ENCODE measurements at regions of chr16 and their contacts with region 1.

Region 1: DNA sequence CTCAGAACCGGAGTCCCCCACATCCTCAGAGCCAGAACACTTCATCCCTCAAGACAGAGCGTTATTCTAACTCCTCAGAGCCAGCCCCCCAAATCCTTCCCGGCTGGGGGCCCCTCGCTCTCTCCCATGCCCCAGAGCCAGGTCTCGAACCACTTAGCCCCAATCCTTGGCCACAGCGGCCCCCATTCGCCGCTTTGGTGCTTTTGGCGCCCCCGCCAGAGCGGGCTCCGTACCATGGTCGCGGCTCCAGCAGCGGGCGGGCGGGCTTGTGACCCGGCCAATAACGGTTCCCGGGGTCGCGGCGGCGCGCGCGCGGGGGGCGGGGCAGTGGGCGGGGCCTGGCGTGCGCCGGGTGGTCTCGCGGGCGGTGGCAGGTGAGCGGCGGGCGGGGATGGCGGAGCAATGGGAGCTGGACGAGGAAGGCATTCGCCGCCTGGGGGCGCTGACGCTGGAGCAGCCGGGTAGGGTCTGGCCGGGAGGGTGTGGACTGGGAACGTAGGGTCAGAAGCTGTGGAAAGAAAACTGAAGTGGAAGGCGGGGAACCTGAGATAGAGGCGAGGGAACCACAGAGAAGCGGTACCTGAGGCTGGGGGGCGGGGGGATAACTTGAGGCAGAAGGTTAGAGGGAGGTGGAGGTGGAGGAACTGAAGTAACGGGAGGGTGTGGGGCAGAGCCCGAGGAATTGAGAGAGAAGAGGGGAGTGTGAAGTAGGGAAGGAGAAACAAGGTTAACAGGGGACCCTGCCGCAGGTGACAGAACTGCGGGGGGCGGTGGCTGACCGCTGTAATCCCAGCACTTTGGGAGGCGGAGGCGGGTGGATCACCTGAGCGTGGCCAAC is at the starts of genes KCTD19 and LRRC36:
- DNase-seq: no peak
- H3K4me3 ChIP-seq: peak within 1 kb of the TSS; percentile 61
- H3K27ac ChIP-seq: no peak within 1 kb of the TSS
- H3K27me3 ChIP-seq: no peaks in the 10 kb centered on the region
- CTCF ChIP-seq: peak; percentile 50
- polyA plus RNA-seq, gene KCTD19: 0.21 and 0.25 TPM in 2 replicates
- polyA plus RNA-seq, gene LRRC36: 0.21 and 0.41 TPM in 2 replicates

Region 2: GRCh38 chr16:67279296-67280089 is 47.2 kb before region 1 on chr16 and contains the start of gene PLEKHG4:
- CTCF ChIA-PET with region 1: no interaction called
- POLR2A ChIA-PET with region 1: no interaction called
- DNase-seq: no peak
- H3K4me3 ChIP-seq: peak within 1 kb of the TSS; percentile 68
- H3K27ac ChIP-seq: peak within 1 kb of the TSS; percentile 98
- H3K27me3 ChIP-seq: no peaks in the 10 kb centered on the region
- CTCF ChIP-seq: peak; percentile 55
- polyA plus RNA-seq, gene PLEKHG4: 17.2 and 23.3 TPM in 2 replicates

Region 3: GRCh38 chr16:67339453-67339852 is 12.8 kb after region 1 on chr16:
- CTCF ChIA-PET with region 1: interaction called, 14 read pairs
- POLR2A ChIA-PET with region 1: no interaction called
- DNase-seq: peak; percentile 10
- H3K4me3 ChIP-seq: no peak overlapping the region
- H3K27ac ChIP-seq: no peak overlapping the region
- H3K27me3 ChIP-seq: no peaks in the 10 kb centered on the region
- CTCF ChIP-seq: peak; percentile 47

Measured in AG04450 (cell line).